GM18951 (cell line): ENCODE measurements at regions of chr17 and their contacts with region 1.

Region 1: GRCh38 chr17:27578718-27579085 is 52.3 kb upstream of the LGALS9 start:
- POLR2A ChIP-seq: no peak

Region 2: DNA sequence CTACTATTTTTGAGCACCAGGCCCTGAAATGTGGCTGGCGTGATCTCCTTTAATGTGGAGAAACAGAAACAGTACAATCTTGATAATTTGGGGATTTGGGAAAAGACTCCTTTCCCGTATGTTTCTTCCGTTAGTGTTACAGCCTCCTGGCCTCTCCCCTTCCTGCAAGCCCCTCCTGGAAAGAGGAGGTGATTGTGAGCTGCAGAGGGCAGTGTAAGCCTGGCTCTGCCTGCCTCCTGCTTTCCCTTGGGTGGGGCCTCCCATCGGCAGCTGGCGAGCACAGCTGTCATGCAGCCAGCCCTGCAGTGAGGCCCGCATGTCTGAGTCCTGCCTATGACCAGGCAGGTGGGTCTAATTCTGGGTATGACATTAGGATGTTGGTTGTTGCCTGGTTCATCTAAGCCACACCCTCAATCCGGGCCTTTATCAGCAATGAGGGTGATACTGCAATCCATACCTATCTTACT is 333.4 kb before region 1 on chr17:
- in situ Hi-C with region 1: loop called (anchors 25 kb)
- POLR2A ChIP-seq: no peak